ENCODE measurements at regions of chr11 and their contacts with region 1.

Region 1: GRCh38 chr11:130314750-130315285 is at the start of gene ZBTB44:
- DNase-seq: peak; percentile 85
- ATAC-seq: peak; percentile 94
- H3K4me3 ChIP-seq: peak within 1 kb of the TSS; percentile 99
- H3K27ac ChIP-seq: peak within 1 kb of the TSS; percentile 85
- H3K4me1 ChIP-seq: peaks cover 6% of the 10 kb centered on the region; the same call in 1 of the 2 replicates
- H3K27me3 ChIP-seq: no peaks in the 10 kb centered on the region
- CTCF ChIP-seq: no peak
- POLR2A ChIP-seq: no peak
- RAD21 ChIP-seq: no peak
- total RNA-seq, gene ZBTB44: 19.4 and 23.3 TPM in 2 replicates

Region 2: GRCh38 chr11:129960216-129961214 is 354.3 kb before region 1 on chr11:
- CTCF ChIA-PET with region 1: no interaction called
- POLR2A ChIA-PET with region 1: interaction called, 12 read pairs
- dilution Hi-C with region 1: no loop called
- in situ Hi-C with region 1: no loop called
- intact Hi-C with region 1: no loop called
- DNase-seq: peak; percentile 96
- ATAC-seq: peak; percentile 92
- H3K4me3 ChIP-seq: no peak overlapping the region
- H3K27ac ChIP-seq: no peak overlapping the region
- H3K4me1 ChIP-seq: peaks cover 5% of the 10 kb centered on the region
- H3K27me3 ChIP-seq: no peaks in the 10 kb centered on the region
- CTCF ChIP-seq: no peak
- POLR2A ChIP-seq: no peak
- RAD21 ChIP-seq: no peak

Region 3: GRCh38 chr11:130383344-130384211 is 68.8 kb after region 1 on chr11:
- CTCF ChIA-PET with region 1: interaction called, 3 read pairs
- POLR2A ChIA-PET with region 1: no interaction called
- dilution Hi-C with region 1: no loop called
- in situ Hi-C with region 1: no loop called
- intact Hi-C with region 1: loop called (anchors 10 kb)
- DNase-seq: peak; percentile 100
- ATAC-seq: peak; percentile 93
- H3K4me3 ChIP-seq: no peak overlapping the region
- H3K27ac ChIP-seq: peak overlapping the region; percentile 31; the same call in 1 of the 2 replicates
- H3K4me1 ChIP-seq: peaks cover 13% of the 10 kb centered on the region
- H3K27me3 ChIP-seq: peaks cover 20% of the 10 kb centered on the region
- CTCF ChIP-seq: no peak
- POLR2A ChIP-seq: no peak
- RAD21 ChIP-seq: 0 out of 2 replicates have a peak, but pooled peaks have one; percentile 1

Region 4: GRCh38 chr11:130427581-130428315 is 112.9 kb after region 1 on chr11:
- CTCF ChIA-PET with region 1: no interaction called
- POLR2A ChIA-PET with region 1: no interaction called
- dilution Hi-C with region 1: no loop called
- in situ Hi-C with region 1: no loop called
- intact Hi-C with region 1: loop called (anchors 5 kb)
- DNase-seq: no peak
- ATAC-seq: peak; percentile 25
- H3K4me3 ChIP-seq: peak overlapping the region; percentile 47
- H3K27ac ChIP-seq: peak overlapping the region; percentile 1; the same call in 1 of the 2 replicates
- H3K4me1 ChIP-seq: peaks cover 6% of the 10 kb centered on the region; the same call in 1 of the 2 replicates
- H3K27me3 ChIP-seq: peaks cover 65% of the 10 kb centered on the region
- CTCF ChIP-seq: peak; percentile 33
- POLR2A ChIP-seq: no peak
- RAD21 ChIP-seq: peak; percentile 47

Measured in IMR-90 (cell line).